Left ventricle myocardium inferior (tissue), 1 donor: ENCODE measurements at regions of chr20 and their contacts with region 1.

Region 1: DNA sequence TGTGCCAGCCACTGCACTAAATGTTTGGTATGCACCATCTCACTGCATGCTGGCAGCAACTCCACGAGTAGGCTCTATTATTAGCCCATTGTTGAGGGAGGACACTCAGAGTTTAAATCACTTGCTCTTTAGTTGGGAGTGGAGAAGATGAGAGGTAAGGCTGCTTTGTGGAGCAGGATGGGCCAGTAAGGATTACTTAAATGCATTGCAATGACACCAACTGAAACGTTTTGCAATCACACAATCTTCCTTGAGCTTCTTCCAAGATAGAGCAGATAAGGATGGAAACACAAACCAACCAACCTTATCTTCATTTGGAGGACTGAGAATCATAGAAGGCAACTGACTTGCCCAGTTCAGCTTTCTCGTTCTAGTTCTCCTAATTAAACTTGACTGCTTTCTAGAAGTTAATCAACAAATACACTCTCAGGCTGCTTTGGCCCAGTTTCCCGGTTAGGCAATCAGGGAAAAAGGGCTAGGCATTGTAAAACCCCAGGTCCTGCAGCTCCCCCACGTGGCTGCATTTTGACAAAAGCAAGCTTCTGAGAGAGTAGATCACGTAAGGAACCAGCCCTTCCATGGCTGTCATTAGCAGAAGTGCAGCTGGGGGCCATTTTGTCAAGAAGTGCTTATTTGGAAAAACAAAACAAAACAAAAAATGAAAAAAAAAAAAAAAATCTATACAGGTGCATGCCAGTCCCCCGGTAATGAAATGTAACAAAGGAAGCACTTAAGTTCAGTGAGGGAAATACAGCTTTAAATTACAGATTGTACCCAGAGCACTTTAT is 130.6 kb downstream of the BCAS1 start:
- DNase-seq: peak; percentile 94
- H3K4me3 ChIP-seq: peak overlapping the region; percentile 29
- H3K27ac ChIP-seq: peak overlapping the region; percentile 87
- H3K4me1 ChIP-seq: peaks cover 64% of the 10 kb centered on the region
- H3K27me3 ChIP-seq: no peaks in the 10 kb centered on the region
- CTCF ChIP-seq: peak; percentile 78

Region 2: GRCh38 chr20:53578492-53579222 is 361.1 kb before region 1 on chr20:
- intact Hi-C with region 1: loop called (anchors 5 kb)
- DNase-seq: no peak
- H3K4me3 ChIP-seq: peak overlapping the region; percentile 29
- H3K27ac ChIP-seq: peak overlapping the region; percentile 66
- H3K4me1 ChIP-seq: peaks cover 59% of the 10 kb centered on the region
- H3K27me3 ChIP-seq: no peaks in the 10 kb centered on the region
- CTCF ChIP-seq: peak; percentile 92

Region 3: DNA sequence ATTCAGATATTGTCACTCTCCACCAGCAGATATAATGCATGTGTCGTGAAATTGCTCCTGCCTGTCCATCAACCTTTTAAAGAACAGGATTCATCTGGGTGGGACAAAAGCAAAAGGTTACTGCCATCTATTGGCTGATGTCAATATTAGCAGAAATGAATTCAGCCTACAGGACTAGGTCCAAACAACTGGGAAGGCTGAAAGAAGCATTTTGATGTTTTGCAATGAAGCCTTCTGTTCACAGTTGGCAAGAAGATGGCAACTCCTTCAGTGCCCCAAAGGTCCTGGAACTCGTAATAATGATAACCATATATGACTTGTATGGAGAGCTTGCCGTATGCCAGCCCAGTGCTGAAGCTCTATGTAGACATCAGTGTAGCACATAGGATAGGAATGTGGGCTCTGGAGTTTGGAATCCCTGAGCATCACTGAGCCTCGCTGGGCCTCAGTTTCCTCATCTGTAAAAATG is 123.1 kb after region 1 on chr20:
- intact Hi-C with region 1: loop called (anchors 10 kb)
- DNase-seq: no peak
- H3K4me3 ChIP-seq: no peak overlapping the region
- H3K27ac ChIP-seq: no peak overlapping the region
- H3K4me1 ChIP-seq: peaks cover 3% of the 10 kb centered on the region
- H3K27me3 ChIP-seq: peaks cover 18% of the 10 kb centered on the region
- CTCF ChIP-seq: peak; percentile 67